Psoas muscle (tissue), 8 donors: ENCODE measurements at regions of chr9 and their contacts with region 1.

Region 1: DNA sequence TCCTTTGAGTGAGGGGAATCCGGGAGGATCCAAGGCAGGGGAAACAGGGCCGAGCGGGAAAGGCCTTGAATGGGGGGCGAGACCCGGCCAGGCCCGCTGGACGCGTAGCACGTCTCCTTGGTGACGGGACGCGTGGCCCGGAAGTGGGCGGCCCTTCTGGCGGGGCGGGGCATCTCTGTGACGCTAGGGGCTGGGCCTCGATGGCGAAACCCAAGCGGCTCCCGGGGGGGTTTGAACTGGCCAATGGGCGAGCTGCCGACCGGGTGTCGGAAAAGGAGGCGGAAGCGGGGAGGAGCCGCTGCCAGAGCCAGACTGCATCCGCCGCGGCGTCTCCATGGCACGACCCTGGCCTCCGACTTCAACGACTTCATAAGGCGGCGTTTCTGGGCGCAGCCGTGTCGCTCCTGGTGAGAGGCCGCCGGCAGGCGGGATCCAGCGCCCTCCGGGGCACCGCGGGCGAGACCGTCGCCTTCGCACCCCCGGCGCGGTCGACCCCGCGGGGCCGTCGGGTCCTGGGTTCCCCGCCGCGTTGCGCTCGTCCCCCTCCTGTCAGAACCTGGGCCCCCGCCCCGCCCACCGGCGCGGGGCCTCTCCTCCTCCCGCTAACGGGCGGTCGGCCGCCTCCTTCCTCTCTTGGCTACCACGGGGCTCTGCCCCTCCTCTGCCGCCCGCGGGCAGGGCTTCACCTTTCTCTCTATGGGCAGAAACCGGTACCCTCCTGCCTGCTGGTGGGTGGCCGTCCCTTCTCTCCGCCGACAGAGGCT is at the start of gene ODF2:
- DNase-seq: peak; percentile 98 to 99
- ATAC-seq: peak; percentile 98 to 99 (median 98)
- H3K4me3 ChIP-seq: peak within 1 kb of the TSS; percentile 86
- H3K27ac ChIP-seq: peak within 1 kb of the TSS; percentile 77
- H3K4me1 ChIP-seq: no peaks in the 10 kb centered on the region
- H3K27me3 ChIP-seq: no peaks in the 10 kb centered on the region
- CTCF ChIP-seq: no peak
- total RNA-seq, gene ODF2: 6.7 to 12.3 (median 7.4) TPM

Region 2: GRCh38 chr9:128558431-128559310 is 102.6 kb after region 1 on chr9:
- intact Hi-C with region 1: loop called in 1 of 2 experiments (anchors 5 kb)
- DNase-seq: peak; percentile 76 to 85
- ATAC-seq: peak; percentile 54 to 67 (median 64)
- H3K4me3 ChIP-seq: peak overlapping the region; percentile 7
- H3K27ac ChIP-seq: peak overlapping the region; percentile 48
- H3K4me1 ChIP-seq: peaks cover 41% of the 10 kb centered on the region
- H3K27me3 ChIP-seq: no peaks in the 10 kb centered on the region
- CTCF ChIP-seq: no peak